ENCODE measurements at regions of chr1 and their contacts with region 1.

Region 1: DNA sequence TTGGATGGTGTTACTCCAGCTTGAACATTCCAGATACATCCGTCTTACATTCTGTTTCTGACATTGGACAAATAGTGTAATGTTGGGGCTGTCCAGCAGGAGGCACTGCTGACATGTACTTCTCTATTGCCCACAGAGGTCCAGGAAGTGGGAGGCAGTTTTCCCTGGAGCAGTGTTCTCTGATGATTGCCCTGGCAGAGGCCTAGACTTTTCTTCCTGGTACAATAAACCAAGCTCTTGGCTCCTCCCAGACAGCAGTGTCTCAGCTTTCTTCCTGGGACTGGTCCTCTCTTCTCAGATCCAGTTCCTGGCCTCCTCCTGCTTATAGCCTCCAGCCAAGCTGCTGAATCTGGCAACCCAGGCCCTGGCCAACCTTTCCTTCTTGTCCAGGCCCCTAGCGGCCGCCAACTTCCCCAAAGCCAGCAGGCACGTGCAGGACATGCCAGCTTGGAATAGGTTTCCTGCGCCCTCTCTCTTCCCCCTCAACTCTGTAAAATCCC is 14.9 kb upstream of the IFNLR1 start:
- DNase-seq: peak; percentile 57 to 86
- H3K4me3 ChIP-seq: no peak overlapping the region
- H3K4me1 ChIP-seq: no peaks in the 10 kb centered on the region
- H3K27me3 ChIP-seq: no peaks in the 10 kb centered on the region

Region 2: DNA sequence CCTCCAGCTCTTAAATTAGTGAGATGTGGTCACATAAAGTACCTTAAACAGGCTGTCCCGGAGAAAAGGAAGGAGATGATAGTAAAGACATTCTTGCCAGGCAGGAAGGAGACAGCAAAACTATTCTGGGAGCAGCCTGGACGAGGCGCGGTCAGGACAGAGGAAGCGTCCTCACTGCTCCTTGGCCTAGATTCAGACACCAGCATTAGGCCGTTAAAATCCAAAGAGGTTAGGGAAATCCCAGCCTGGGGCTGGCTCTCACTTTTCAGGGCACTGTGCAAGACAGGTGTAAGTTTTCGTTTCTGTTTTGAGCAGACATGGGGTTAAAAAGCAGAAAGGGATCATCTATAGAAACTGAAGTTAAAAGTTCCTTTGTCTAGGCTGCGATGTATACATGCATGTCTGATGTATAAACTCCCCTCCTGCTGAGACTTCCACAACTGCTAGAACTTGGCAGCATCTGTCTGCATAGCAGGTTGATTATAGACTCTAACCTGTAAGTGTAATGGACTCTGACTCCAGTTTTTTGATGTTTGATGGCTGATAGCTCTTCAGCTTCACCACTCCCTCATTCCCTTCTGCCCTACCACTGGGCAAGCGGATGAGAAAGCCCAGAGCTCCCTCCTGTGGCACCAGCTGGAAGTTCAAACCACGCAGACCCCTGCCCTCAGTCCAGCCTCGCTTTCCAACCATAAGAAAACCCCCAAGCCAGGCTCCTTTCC is 190.1 kb after region 1 on chr1:
- in situ Hi-C with region 1: loop called (anchors 5 kb)
- DNase-seq: peak; percentile 57 to 80
- H3K4me3 ChIP-seq: no peak overlapping the region
- H3K4me1 ChIP-seq: peaks cover 10% of the 10 kb centered on the region; the same call in 1 of the 2 replicates
- H3K27me3 ChIP-seq: no peaks in the 10 kb centered on the region

Region 3: DNA sequence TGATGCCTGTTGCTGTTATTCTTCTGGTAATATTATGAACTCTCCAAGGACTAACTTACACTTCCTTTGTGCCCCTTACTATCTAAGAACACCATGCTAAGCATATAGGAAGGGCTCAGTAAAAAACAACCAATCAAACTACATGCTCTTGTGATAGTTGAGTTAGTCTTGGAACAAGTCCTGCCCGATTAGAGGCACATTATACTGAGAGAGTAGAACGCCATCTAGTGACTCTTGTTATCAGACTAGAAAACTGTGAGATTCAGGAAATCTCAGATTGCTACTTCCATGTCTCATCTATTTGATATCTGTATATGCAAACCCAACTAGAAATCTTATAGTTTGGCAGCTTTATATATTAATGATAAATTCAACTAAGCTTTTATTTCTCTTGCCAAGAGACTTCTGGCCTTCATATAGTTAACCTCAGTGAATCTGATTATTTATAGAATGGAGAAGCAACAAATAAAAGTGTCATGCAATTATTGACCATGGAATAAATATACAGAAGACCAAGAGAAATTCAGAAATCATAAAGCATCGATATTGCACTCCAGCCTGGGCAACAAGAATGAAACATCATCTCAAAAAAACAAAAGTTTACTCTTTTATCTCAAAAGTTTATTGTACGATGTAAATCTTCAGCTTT is 433.3 kb after region 1 on chr1:
- in situ Hi-C with region 1: loop called (anchors 10 kb)
- DNase-seq: peak in 1 of 2 experiments; percentile 82
- H3K4me3 ChIP-seq: no peak overlapping the region
- H3K4me1 ChIP-seq: peaks cover 13% of the 10 kb centered on the region
- H3K27me3 ChIP-seq: no peaks in the 10 kb centered on the region

Region 4: GRCh38 chr1:24847995-24848881 is 646.2 kb after region 1 on chr1:
- in situ Hi-C with region 1: loop called (anchors 25 kb)
- DNase-seq: peak; percentile 79 to 94
- H3K4me3 ChIP-seq: peak overlapping the region; percentile 39
- H3K4me1 ChIP-seq: peaks cover 13% of the 10 kb centered on the region
- H3K27me3 ChIP-seq: no peaks in the 10 kb centered on the region